Common myeloid progenitor, CD34-positive (primary cell): ENCODE measurements at regions of chr1 and their contacts with region 1.

Region 1: DNA sequence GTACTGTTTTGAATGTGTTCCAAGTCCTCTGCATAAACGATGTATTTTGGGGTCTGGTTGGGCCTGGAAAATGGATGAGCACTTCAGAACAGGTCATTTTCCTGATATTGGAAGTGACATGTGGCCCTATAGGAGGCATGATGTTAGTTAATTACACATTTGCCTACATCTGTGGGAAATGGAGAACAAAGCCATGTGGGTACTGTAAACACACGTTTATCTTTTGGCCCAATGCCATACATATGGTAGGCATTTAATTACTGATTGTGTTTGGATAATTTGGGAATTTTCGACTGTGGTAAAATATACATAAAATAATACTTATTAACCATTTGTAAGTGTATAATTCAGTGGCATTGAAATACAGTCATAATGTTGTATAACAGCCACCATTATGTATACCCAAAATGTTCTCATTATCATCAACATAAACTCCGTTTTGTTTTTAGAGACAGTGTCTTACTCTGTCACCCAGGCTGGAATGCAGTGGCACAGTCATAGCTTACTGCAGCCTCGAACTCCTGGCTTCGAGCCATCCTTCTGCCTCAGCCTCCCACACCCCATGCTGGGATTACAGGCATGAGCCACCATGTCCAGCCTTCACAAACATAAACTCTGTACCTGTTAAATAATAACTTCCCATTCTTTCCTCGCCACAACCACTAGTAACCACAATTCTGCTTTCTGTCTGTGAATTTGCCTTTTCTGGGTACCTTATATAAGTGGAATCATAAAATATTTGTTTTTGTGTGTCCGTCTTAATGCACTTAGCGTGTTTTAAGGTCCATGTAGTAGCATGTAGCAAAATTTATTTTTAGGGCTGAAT is 11.9 kb upstream of the RNPEP start:
- DNase-seq: no peak
- H3K4me3 ChIP-seq: no peak overlapping the region
- H3K27ac ChIP-seq: no peak overlapping the region
- H3K4me1 ChIP-seq: peaks cover 0 to 2% (median 0%) of the 10 kb centered on the region in 4 experiments
- H3K27me3 ChIP-seq: no peaks in the 10 kb centered on the region

Region 2: DNA sequence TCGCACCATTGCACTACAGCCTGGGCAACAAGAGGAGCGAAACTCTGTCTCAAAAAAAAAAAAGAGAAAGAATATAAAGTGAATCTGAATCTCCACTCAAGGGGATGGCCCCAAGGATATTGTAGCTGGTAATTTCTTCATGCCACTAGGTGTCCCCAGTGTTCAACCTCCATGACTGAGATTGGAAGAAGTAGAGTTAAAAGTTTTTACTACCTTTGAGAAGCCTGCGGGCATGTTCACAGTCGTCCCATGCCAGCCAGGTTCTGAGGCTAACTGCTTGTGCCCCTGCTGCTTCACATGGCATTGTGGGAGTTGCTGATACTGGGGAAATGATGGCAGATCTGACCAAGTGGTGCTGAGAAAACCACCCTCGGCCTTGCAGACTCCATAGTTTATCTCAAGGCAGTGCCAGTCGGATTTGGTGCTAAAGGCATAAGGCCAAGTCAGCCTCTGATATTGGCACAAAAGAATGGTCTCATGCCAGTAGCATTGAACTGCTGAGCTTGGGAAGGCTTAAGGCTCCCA is 92.6 kb before region 1 on chr1:
- CTCF ChIA-PET with region 1: interaction called, 90 read pairs
- POLR2A ChIA-PET with region 1: interaction called, 9 read pairs
- DNase-seq: peak; percentile 52 to 79 (median 73)
- H3K4me3 ChIP-seq: no peak overlapping the region
- H3K27ac ChIP-seq: no peak overlapping the region
- H3K4me1 ChIP-seq: peaks cover 2 to 27% (median 12%) of the 10 kb centered on the region in 4 experiments
- H3K27me3 ChIP-seq: no peaks in the 10 kb centered on the region

Region 3: GRCh38 chr1:201888282-201889089 is 82.1 kb before region 1 on chr1 and contains the start of gene SHISA4:
- CTCF ChIA-PET with region 1: interaction called, 142 read pairs
- POLR2A ChIA-PET with region 1: no interaction called
- DNase-seq: peak in 2 of 3 donors; percentile 37 to 49
- H3K4me3 ChIP-seq: peak within 1 kb of the TSS; percentile 16 to 73 (median 59)
- H3K27ac ChIP-seq: no peak within 1 kb of the TSS
- H3K4me1 ChIP-seq: peaks cover 7 to 27% (median 25%) of the 10 kb centered on the region in 4 experiments
- H3K27me3 ChIP-seq: peaks cover 9 to 49% (median 31%) of the 10 kb centered on the region in 5 experiments

Region 4: DNA sequence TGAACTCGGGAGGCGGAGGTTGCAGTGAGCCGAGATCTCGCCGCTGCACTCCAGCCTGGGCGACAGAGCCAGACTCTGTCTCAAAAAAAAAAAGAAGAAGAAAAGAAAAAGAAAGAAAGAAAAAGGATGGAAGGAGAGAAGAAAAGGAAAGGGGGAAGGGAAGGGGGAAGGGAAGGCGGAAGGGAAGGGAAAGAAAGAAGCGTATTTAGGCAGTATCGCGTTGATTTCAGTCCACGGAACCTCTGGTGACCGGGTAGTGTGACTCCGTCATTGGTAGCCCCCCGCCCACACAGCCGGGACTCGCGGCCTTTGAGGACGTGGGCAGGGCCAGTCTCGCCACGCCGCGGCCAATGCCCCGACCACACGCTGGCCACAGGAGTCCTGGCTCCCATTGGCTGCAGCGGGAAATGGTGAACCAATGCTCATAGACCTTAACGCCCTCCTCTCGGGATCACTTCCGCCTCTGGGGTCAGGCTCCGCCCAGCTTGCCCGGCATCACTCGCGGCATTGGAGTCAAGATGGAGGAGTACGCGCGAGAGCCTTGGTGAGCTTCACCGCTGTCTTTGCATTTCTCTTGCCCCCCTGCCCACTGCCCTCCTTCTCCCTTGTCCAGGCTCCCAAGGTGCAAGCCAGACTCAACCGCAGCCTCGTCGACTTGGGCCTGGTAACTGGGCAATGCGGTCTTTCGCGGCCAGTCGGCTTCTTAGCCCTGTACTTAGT is 15.4 kb before region 1 on chr1 and contains the start of gene TIMM17A:
- CTCF ChIA-PET with region 1: interaction called, 12 read pairs
- POLR2A ChIA-PET with region 1: interaction called, 7 read pairs
- DNase-seq: peak; percentile 97 to 99 (median 98)
- H3K4me3 ChIP-seq: peak within 1 kb of the TSS; percentile 79 to 100 (median 99)
- H3K27ac ChIP-seq: peak within 1 kb of the TSS; percentile 93 to 96
- H3K4me1 ChIP-seq: peaks cover 4 to 16% (median 11%) of the 10 kb centered on the region in 4 experiments
- H3K27me3 ChIP-seq: no peaks in the 10 kb centered on the region

Region 5: DNA sequence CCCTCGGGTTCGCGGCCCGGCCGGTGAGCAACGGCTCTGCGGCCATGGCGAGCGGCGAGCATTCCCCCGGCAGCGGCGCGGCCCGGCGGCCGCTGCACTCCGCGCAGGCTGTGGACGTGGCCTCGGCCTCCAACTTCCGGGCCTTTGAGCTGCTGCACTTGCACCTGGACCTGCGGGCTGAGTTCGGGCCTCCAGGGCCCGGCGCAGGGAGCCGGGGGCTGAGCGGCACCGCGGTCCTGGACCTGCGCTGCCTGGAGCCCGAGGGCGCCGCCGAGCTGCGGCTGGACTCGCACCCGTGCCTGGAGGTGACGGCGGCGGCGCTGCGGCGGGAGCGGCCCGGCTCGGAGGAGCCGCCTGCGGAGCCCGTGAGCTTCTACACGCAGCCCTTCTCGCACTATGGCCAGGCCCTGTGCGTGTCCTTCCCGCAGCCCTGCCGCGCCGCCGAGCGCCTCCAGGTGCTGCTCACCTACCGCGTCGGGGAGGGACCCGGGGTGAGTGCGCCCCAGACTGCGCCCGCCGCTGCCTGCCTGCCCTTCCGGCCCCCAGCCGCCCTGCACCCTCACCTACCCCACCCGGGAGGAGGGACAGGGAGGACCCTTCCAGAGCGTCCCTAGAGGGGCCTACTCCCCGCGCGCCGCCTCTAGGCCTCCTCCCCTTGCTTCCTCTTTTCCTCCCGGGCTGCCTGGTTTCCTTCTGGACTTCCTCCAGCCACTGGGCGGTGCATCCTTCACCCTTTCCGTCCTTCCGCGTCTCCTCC is 12.3 kb after region 1 on chr1 and contains the start of gene RNPEP:
- CTCF ChIA-PET with region 1: interaction called, 15 read pairs
- POLR2A ChIA-PET with region 1: no interaction called
- DNase-seq: peak; percentile 42 to 77 (median 59)
- H3K4me3 ChIP-seq: peak within 1 kb of the TSS; percentile 66 to 90 (median 75)
- H3K27ac ChIP-seq: peak within 1 kb of the TSS; percentile 7 to 75
- H3K4me1 ChIP-seq: peaks cover 2 to 15% (median 15%) of the 10 kb centered on the region in 4 experiments
- H3K27me3 ChIP-seq: no peaks in the 10 kb centered on the region

Region 6: GRCh38 chr1:202056644-202057461 is 86.3 kb after region 1 on chr1:
- CTCF ChIA-PET with region 1: no interaction called
- POLR2A ChIA-PET with region 1: no interaction called
- DNase-seq: no peak
- H3K4me3 ChIP-seq: no peak overlapping the region
- H3K27ac ChIP-seq: no peak overlapping the region
- H3K4me1 ChIP-seq: no peaks in the 10 kb centered on the region
- H3K27me3 ChIP-seq: no peaks in the 10 kb centered on the region